Activated CD4-positive, alpha-beta T cell treated with anti-CD3 and anti-CD28 coated beads, Interleukin-2, amount 10 ng/mL, durations not matched to agents 24 days and 14 days (primary cell): ENCODE measurements at regions of chr2 and their contacts with region 1.

Region 1: GRCh38 chr2:96485751-96486651 is 19.2 kb downstream of the NEURL3 start:
- DNase-seq: peak; percentile 97
- H3K4me3 Mint-ChIP-seq: peak overlapping the region; percentile 92
- H3K27ac Mint-ChIP-seq: peak overlapping the region; percentile 98
- H3K4me1 Mint-ChIP-seq: peaks cover 55% of the 10 kb centered on the region
- H3K27me3 Mint-ChIP-seq: peaks cover 2% of the 10 kb centered on the region

Region 2: GRCh38 chr2:96164459-96165184 is 321.4 kb before region 1 on chr2:
- intact Hi-C with region 1: loop called (anchors 5 kb)
- DNase-seq: peak; percentile 88
- H3K4me3 Mint-ChIP-seq: peak overlapping the region; percentile 86
- H3K27ac Mint-ChIP-seq: peak overlapping the region; percentile 99
- H3K4me1 Mint-ChIP-seq: peaks cover 52% of the 10 kb centered on the region
- H3K27me3 Mint-ChIP-seq: no peaks in the 10 kb centered on the region

Region 3: GRCh38 chr2:96344011-96344410 is 142.0 kb before region 1 on chr2:
- intact Hi-C with region 1: loop called (anchors 5 kb)
- DNase-seq: peak; percentile 75
- H3K4me3 Mint-ChIP-seq: no peak overlapping the region
- H3K27ac Mint-ChIP-seq: peak overlapping the region; percentile 75
- H3K4me1 Mint-ChIP-seq: peaks cover 47% of the 10 kb centered on the region
- H3K27me3 Mint-ChIP-seq: no peaks in the 10 kb centered on the region

Region 4: DNA sequence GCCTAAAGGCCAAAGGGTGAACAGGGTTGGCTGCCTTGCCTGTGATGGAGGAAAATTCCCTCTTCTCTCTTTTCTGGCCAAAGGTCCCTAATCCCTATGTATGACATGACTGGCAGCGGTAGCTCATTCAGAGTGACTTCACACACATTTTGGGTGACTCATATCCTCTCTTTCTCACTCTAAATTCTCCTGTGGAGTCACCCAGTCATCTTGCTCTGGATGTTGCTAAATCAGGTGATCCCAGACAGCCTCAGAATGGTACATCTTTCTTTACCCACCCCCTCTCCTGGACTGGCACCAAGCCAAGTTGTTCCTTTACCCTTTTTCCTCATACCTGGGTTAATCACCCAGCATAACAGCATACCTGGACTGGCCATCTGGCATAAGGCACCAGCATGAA is 58.1 kb before region 1 on chr2:
- intact Hi-C with region 1: loop called (anchors 5 kb)
- DNase-seq: no peak
- H3K4me3 Mint-ChIP-seq: no peak overlapping the region
- H3K27ac Mint-ChIP-seq: peak overlapping the region; percentile 39
- H3K4me1 Mint-ChIP-seq: peaks cover 9% of the 10 kb centered on the region
- H3K27me3 Mint-ChIP-seq: peaks cover 4% of the 10 kb centered on the region

Region 5: GRCh38 chr2:96514521-96514920 is 28.5 kb after region 1 on chr2:
- intact Hi-C with region 1: no loop called
- DNase-seq: no peak
- H3K4me3 Mint-ChIP-seq: no peak overlapping the region
- H3K27ac Mint-ChIP-seq: no peak overlapping the region
- H3K4me1 Mint-ChIP-seq: peaks cover 17% of the 10 kb centered on the region
- H3K27me3 Mint-ChIP-seq: no peaks in the 10 kb centered on the region

Region 6: DNA sequence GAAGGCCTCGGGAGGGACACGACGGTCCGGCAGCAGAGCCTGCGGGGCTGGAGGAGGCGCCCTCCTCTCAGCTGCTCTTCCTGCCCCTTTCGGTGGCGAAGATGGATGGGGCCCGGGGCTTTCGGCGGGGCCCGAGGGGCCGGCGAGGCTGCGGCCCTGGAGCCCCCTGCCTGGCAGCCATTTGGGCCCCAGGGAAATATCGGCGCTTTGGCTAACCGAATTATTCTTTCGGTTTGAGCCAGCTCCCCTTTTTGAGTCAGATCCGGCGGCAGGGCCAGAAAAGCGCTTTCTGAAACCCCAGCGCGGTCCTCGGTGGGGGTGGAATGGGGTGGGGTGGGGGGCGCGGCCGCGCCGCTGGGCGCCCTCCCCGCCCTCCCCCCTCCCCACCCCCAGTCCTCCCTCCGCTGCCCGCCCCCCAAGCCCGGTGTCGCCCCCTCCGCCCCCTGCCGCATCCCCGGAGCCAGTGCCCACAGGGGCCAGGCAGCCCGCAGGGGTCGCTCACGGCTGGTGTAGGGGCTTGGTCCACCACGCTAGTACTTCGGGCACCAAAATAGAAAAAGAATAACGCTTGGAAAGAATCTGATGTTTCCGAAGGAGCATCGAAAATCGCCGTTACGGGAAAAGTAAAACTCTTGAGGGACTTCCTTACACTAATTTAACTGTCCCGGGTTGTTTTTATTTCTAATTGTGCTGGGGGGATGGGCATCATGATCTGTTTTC is 41.4 kb after region 1 on chr2:
- intact Hi-C with region 1: no loop called
- DNase-seq: peak; percentile 91
- H3K4me3 Mint-ChIP-seq: peak overlapping the region; percentile 81
- H3K27ac Mint-ChIP-seq: peak overlapping the region; percentile 94
- H3K4me1 Mint-ChIP-seq: peaks cover 86% of the 10 kb centered on the region
- H3K27me3 Mint-ChIP-seq: no peaks in the 10 kb centered on the region

Region 7: DNA sequence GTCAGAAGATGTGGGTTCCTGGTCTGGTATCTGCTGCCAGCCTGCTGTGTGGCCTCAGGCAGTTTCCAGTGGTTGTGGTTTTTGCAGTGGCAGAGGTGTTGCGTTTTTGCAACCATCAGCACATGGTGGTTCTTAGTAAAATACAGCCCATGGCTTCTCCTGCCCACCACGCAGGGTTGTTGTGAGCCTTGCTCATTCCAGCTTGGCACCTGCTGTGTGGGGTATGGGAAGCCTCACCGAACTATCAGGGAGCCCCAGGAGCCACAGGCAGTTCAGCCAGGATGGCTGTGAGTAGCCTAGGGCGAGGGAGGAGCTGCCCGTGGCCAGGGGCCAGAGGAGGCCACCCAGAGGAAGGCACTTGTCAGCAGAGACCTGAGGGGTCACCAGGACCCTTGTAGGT is 60.3 kb after region 1 on chr2:
- intact Hi-C with region 1: no loop called
- DNase-seq: peak; percentile 66
- H3K4me3 Mint-ChIP-seq: peak overlapping the region; percentile 53
- H3K27ac Mint-ChIP-seq: peak overlapping the region; percentile 72
- H3K4me1 Mint-ChIP-seq: peaks cover 51% of the 10 kb centered on the region
- H3K27me3 Mint-ChIP-seq: no peaks in the 10 kb centered on the region